CD4-positive, alpha-beta memory T cell (primary cell): ENCODE measurements at regions of chr3 and their contacts with region 1.

Region 1: DNA sequence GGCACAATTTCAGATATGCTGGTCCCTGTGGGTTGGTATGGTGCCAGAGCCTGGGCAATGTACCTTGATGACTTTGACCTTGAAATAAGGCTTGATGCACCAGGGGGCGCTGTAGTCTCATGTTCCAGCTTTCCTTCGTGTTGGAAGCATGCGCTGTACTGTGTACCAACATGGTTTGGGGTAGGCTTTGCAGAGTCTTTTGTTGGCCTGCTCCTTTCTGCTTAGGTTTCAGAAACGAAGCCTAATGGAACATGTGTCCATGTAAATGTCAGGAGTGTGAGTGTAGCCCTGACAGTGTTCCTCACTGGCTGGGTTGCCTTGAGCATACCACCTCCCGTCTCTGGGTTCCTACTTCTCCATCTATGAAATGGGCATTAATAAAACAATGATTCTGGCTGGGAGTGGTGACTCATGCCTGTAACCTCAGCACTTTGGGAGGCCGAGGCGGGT is 3.6 kb upstream of the CCR4 start:
- DNase-seq: peak; percentile 82 to 89 (median 85)
- H3K4me3 ChIP-seq: no peak overlapping the region
- H3K4me3 Mint-ChIP-seq: peak overlapping the region in 2 of 8 donors; percentile 7 to 52
- H3K27ac ChIP-seq: no peak overlapping the region
- H3K27ac Mint-ChIP-seq: peak overlapping the region in 6 of 7 donors; percentile 5 to 91 (median 62)
- H3K4me1 ChIP-seq: peaks cover 42% of the 10 kb centered on the region
- H3K4me1 Mint-ChIP-seq: peaks cover 20 to 52% (median 37%) of the 10 kb centered on the region in 4 donors
- H3K27me3 ChIP-seq: no peaks in the 10 kb centered on the region
- H3K27me3 Mint-ChIP-seq: no peaks in the 10 kb centered on the region

Region 2: DNA sequence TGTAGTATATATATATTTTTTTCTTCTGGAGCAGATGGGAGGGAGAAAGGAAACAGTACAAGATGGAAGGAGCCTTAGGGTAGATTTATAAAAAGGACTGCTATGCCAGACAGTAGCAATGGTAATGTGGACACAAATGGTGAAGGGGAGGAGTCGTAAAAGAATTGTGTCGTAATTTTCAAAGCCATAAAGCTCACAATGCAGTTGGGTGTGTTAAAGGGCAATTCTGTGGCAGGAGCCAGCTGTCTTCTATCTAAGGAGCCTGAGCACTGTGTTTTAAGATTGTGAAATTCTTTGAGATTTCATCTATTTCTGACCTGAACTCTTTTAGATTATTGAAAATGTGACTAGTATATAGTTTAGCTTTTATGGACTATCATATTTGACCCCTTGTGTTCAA is 203.9 kb before region 1 on chr3:
- CTCF ChIA-PET with region 1: no interaction called
- POLR2A ChIA-PET with region 1: no interaction called
- intact Hi-C with region 1: no loop called
- DNase-seq: no peak
- H3K4me3 ChIP-seq: no peak overlapping the region
- H3K4me3 Mint-ChIP-seq: no peak overlapping the region
- H3K27ac ChIP-seq: no peak overlapping the region
- H3K27ac Mint-ChIP-seq: no peak overlapping the region
- H3K4me1 ChIP-seq: no peaks in the 10 kb centered on the region
- H3K4me1 Mint-ChIP-seq: no peaks in the 10 kb centered on the region
- H3K27me3 ChIP-seq: no peaks in the 10 kb centered on the region
- H3K27me3 Mint-ChIP-seq: no peaks in the 10 kb centered on the region

Region 3: GRCh38 chr3:32989171-32989570 is 41.4 kb after region 1 on chr3:
- CTCF ChIA-PET with region 1: interaction called, 3 read pairs
- POLR2A ChIA-PET with region 1: interaction called, 24 read pairs
- intact Hi-C with region 1: no loop called
- DNase-seq: no peak
- H3K4me3 ChIP-seq: no peak overlapping the region
- H3K4me3 Mint-ChIP-seq: peak overlapping the region; percentile 15 to 77 (median 60)
- H3K27ac ChIP-seq: peak overlapping the region; percentile 30
- H3K27ac Mint-ChIP-seq: peak overlapping the region; percentile 5 to 89 (median 83)
- H3K4me1 ChIP-seq: peaks cover 51% of the 10 kb centered on the region
- H3K4me1 Mint-ChIP-seq: peaks cover 36 to 56% (median 47%) of the 10 kb centered on the region in 4 donors
- H3K27me3 ChIP-seq: no peaks in the 10 kb centered on the region
- H3K27me3 Mint-ChIP-seq: no peaks in the 10 kb centered on the region

Region 4: DNA sequence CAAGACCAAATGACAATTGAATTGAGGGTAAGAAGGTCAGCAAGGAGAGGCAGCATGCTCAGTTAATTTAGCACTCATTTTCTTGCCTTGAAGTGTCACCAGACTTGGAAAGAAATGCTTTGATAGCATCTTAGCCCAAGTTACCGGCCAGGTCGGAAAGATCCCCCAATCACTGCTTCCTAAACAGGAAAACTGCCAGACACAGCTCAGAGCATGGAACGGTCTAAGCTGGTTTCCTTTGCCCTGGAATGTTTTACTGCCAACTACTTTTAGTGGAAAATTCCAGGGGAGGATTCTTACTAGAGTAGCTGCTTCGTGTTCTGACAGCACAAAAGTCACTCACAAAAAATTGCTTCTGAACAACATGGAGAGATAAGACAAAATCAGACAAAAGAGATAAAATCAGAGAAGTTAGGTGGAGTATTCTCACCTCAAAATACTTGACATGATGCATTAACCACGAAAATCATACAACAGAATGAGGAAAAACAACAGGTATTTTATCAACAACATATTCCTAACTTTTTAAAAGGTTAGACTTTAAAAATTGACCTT is 69.1 kb after region 1 on chr3:
- CTCF ChIA-PET with region 1: interaction called, 16 read pairs
- POLR2A ChIA-PET with region 1: interaction called, 13 read pairs
- intact Hi-C with region 1: loop called (anchors 2 kb)
- DNase-seq: no peak
- H3K4me3 ChIP-seq: no peak overlapping the region
- H3K4me3 Mint-ChIP-seq: peak overlapping the region; percentile 28 to 79 (median 55)
- H3K27ac ChIP-seq: peak overlapping the region; percentile 11
- H3K27ac Mint-ChIP-seq: peak overlapping the region; percentile 2 to 96 (median 82)
- H3K4me1 ChIP-seq: peaks cover 71% of the 10 kb centered on the region
- H3K4me1 Mint-ChIP-seq: peaks cover 58 to 96% (median 77%) of the 10 kb centered on the region in 4 donors
- H3K27me3 ChIP-seq: no peaks in the 10 kb centered on the region
- H3K27me3 Mint-ChIP-seq: no peaks in the 10 kb centered on the region

Region 5: GRCh38 chr3:33047842-33048834 is 100.3 kb after region 1 on chr3:
- CTCF ChIA-PET with region 1: interaction called, 53 read pairs
- POLR2A ChIA-PET with region 1: interaction called, 7 read pairs
- intact Hi-C with region 1: no loop called
- DNase-seq: peak; percentile 81 to 90 (median 86)
- H3K4me3 ChIP-seq: peak overlapping the region in 1 of 2 donors; percentile 47
- H3K4me3 Mint-ChIP-seq: peak overlapping the region; percentile 70 to 95 (median 86)
- H3K27ac ChIP-seq: peak overlapping the region; percentile 36
- H3K27ac Mint-ChIP-seq: peak overlapping the region; percentile 90 to 99 (median 98)
- H3K4me1 ChIP-seq: peaks cover 89% of the 10 kb centered on the region
- H3K4me1 Mint-ChIP-seq: peaks cover 62 to 86% (median 78%) of the 10 kb centered on the region in 4 donors
- H3K27me3 ChIP-seq: no peaks in the 10 kb centered on the region
- H3K27me3 Mint-ChIP-seq: no peaks in the 10 kb centered on the region

Region 6: DNA sequence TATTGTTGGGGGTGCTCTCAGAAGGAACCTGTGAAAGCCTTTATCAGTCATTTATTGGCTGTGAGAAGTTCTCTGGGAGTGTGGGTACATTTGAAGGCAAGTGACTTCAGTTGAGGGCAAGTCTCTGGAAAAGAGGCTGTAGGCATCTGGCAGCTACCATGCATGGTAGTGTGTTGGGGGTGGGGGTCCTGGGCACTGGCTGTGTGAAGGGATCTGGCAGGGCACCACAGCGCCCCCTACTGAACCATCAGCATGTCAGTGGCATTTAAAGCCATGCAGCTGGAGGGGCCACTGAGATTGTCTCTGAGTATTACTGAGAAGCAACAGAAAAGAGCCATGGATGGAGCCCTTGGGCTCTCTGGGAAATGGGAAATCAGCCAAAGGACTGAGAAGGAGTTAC is 196.6 kb after region 1 on chr3:
- CTCF ChIA-PET with region 1: interaction called, 3 read pairs
- POLR2A ChIA-PET with region 1: no interaction called
- intact Hi-C with region 1: loop called (anchors 1 kb)
- DNase-seq: peak in 3 of 5 donors; percentile 7 to 19 (median 13)
- H3K4me3 ChIP-seq: no peak overlapping the region
- H3K4me3 Mint-ChIP-seq: no peak overlapping the region
- H3K27ac ChIP-seq: no peak overlapping the region
- H3K27ac Mint-ChIP-seq: peak overlapping the region in 2 of 7 donors; percentile 17 to 55
- H3K4me1 ChIP-seq: no peaks in the 10 kb centered on the region
- H3K4me1 Mint-ChIP-seq: peaks cover 0 to 5% (median 1%) of the 10 kb centered on the region in 4 donors
- H3K27me3 ChIP-seq: no peaks in the 10 kb centered on the region
- H3K27me3 Mint-ChIP-seq: no peaks in the 10 kb centered on the region